Esophagus squamous epithelium (tissue), 5 donors: ENCODE measurements at regions of chr11 and their contacts with region 1.

Region 1: DNA sequence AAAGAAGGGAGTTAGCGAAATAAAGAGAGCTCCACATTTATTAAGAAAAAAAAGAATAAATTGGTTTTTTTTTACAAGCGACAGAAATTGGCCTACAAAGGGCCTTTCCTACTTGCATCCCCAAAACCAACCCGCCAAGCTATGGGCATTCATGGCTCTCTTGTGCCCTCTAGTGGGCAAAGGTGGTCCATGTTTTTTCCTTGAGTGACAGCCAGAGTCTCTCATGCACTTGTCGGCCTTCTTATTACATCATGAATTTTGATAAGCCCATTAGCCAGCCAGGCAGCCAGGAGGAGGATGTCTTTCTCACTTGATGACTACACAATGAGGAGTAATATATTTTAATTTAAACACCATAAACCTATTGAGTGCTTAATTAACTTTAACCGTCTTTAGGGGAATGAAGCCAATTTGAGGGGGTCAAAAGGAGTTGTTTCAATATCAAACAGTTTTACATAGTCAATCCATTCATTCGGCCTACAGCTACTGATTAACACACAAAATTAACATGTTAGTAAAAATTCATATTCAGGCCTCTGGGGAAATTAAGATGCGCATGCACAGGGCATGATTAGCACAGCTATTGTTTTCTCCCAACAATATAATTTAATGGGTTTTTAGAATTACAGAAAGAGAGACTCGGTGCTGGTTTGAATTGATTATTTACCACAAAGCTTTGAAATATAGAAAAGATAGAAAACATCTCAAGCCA is 85.5 kb downstream of the RCN1 start:
- DNase-seq: peak; percentile 2
- H3K4me3 ChIP-seq: no peak overlapping the region
- H3K27ac ChIP-seq: no peak overlapping the region
- H3K4me1 ChIP-seq: peaks cover 0 to 11% (median 0%) of the 10 kb centered on the region in 3 donors
- H3K27me3 ChIP-seq: peaks cover 0 to 12% (median 0%) of the 10 kb centered on the region in 4 donors
- CTCF ChIP-seq: peak; percentile 60 to 86 (median 80)
- POLR2A ChIP-seq: no peak

Region 2: DNA sequence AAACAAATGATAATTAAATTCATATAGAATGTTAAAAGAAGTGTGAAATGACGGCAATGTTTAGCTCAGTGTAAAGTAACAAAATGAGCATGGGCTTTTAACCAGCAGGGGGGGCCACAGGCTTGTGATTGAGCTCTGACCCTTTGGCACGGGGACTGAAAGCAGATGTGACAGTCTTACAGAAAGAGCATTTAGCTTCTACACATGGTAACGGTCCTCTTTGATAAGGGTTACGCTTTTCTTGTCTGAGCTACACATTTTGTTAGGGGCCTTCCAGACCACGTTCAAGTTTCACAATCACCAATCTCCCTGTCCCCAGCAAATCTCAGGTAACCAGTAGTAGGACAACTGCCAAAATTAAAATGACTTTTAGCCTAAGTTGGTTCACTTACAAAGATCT is 1069.3 kb before region 1 on chr11:
- intact Hi-C with region 1: loop called (anchors 10 kb)
- DNase-seq: no peak
- H3K4me3 ChIP-seq: no peak overlapping the region
- H3K27ac ChIP-seq: no peak overlapping the region
- H3K4me1 ChIP-seq: no peaks in the 10 kb centered on the region
- H3K27me3 ChIP-seq: no peaks in the 10 kb centered on the region
- CTCF ChIP-seq: peak; percentile 36 to 61 (median 52)
- POLR2A ChIP-seq: no peak

Region 3: GRCh38 chr11:32052218-32052617 is 124.2 kb before region 1 on chr11:
- intact Hi-C with region 1: loop called (anchors 2 kb)
- DNase-seq: no peak
- H3K4me3 ChIP-seq: no peak overlapping the region
- H3K27ac ChIP-seq: no peak overlapping the region
- H3K4me1 ChIP-seq: no peaks in the 10 kb centered on the region
- H3K27me3 ChIP-seq: peaks cover 0 to 28% (median 0%) of the 10 kb centered on the region in 4 donors
- CTCF ChIP-seq: peak; percentile 53 to 77 (median 70)
- POLR2A ChIP-seq: no peak